H1 (cell line): ENCODE measurements at regions of chr10 and their contacts with region 1.

Region 1: GRCh38 chr10:77564731-77565589 is 72.6 kb downstream of the KCNMA1 start:
- DNase-seq: peak; percentile 77 to 82
- H3K4me3 ChIP-seq: peak overlapping the region in 2 of 4 experiments; percentile 9 to 19; a peak in 2 of 8 replicates
- H3K27ac ChIP-seq: peak overlapping the region; percentile 59; the same call in 1 of the 2 replicates
- H3K4me1 ChIP-seq: peaks cover 9 to 18% (median 14%) of the 10 kb centered on the region in 4 experiments
- H3K27me3 ChIP-seq: no peaks in the 10 kb centered on the region
- CTCF ChIP-seq: no peak
- EP300 ChIP-seq: peak in 1 of 2 experiments; percentile 82; a peak in 1 of 3 replicates
- POLR2A ChIP-seq: peak in 1 of 2 experiments; percentile 78; a peak in 2 of 3 replicates
- RAD21 ChIP-seq: no peak

Region 2: GRCh38 chr10:77553971-77554365 is 11.0 kb before region 1 on chr10:
- CTCF ChIA-PET with region 1: interaction called, 3 read pairs
- POLR2A ChIA-PET with region 1: interaction called, 21 read pairs
- DNase-seq: no peak
- H3K4me3 ChIP-seq: no peak overlapping the region
- H3K27ac ChIP-seq: no peak overlapping the region
- H3K4me1 ChIP-seq: peaks cover 0 to 8% (median 0%) of the 10 kb centered on the region in 4 experiments; a peak in 1 of 7 replicates
- H3K27me3 ChIP-seq: no peaks in the 10 kb centered on the region
- CTCF ChIP-seq: no peak
- EP300 ChIP-seq: no peak
- POLR2A ChIP-seq: no peak
- RAD21 ChIP-seq: no peak

Region 3: DNA sequence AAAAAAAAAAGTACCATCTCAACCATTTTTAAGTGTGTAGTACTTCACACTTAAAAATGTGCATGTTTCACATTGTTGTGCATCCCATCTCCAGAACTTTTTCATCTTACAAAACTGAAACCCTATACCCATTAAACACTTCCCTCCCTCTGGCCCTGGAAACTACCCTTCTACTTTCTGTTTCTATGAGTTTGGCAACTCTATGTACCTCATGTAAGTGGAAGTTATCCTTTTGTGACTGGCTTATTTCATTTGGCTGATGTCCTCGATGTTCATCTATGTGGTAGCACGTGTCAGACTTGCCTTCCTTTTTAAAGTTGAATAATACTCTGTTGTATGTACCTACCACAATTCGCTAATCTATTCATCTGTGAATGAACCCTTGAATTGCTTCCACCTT is 60.4 kb after region 1 on chr10:
- CTCF ChIA-PET with region 1: no interaction called
- POLR2A ChIA-PET with region 1: no interaction called
- DNase-seq: no peak
- H3K4me3 ChIP-seq: no peak overlapping the region
- H3K27ac ChIP-seq: no peak overlapping the region
- H3K4me1 ChIP-seq: peaks cover 0 to 11% (median 3%) of the 10 kb centered on the region in 4 experiments; a peak in 4 of 7 replicates
- H3K27me3 ChIP-seq: no peaks in the 10 kb centered on the region
- CTCF ChIP-seq: no peak
- EP300 ChIP-seq: no peak
- POLR2A ChIP-seq: no peak
- RAD21 ChIP-seq: no peak